Aorta (tissue), 5 donors: ENCODE measurements at regions of chr14 and their contacts with region 1.

Region 1: DNA sequence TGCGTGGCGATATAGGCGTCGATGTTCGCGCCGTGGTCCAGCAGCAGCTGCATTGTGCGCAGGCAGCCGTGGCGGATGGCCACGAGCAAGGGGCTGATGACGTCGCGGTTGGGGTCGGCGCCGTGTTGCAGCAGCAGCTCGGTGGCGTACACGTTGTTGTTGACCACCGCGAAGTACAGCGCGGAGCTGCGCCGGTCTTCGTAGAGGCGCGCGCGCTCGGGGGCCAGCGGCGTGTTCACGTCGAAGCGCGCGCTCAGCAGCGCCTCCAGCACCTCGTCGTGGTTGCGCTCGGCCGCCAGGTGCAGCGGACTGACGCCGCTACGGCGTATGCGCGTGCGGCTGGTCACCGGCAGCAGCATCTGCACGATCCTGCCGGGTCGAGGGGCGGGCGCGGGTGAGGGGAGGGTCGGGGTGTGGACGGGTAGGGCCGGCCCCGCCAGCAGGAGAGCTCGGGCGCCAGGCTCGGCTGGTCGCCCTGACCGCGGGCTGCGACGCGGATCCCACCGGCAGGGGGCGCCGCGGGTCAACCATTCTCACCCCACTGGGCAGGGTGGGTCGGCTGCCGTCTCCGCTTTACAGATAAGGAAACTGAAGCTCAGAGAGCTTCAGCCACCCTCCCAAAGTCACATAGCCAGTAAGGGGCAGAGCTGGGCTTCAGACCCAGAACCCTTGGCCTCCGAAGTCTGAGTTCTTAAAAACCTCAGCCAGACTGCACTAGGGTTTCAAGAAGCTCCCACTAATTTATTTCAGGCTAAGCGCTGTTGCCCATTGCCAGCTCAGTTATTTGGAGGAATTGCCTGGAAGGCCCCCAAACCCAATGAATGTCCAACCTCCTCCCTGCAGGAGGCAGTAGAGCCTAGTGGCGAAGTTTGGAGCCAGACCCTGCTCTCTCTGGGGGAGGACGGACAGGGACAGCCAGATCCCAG is 12.4 kb downstream of the FAM181A start:
- DNase-seq: peak; percentile 90 to 95
- ATAC-seq: peak; percentile 87
- H3K4me3 ChIP-seq: no peak overlapping the region
- H3K27ac ChIP-seq: peak overlapping the region; percentile 16 to 37
- H3K4me1 ChIP-seq: no peaks in the 10 kb centered on the region
- H3K27me3 ChIP-seq: no peaks in the 10 kb centered on the region

Region 2: GRCh38 chr14:94001501-94002396 is 62.2 kb after region 1 on chr14:
- intact Hi-C with region 1: loop called (anchors 1 kb)
- DNase-seq: peak; percentile 65 to 83
- ATAC-seq: peak; percentile 79
- H3K4me3 ChIP-seq: no peak overlapping the region
- H3K27ac ChIP-seq: no peak overlapping the region
- H3K4me1 ChIP-seq: no peaks in the 10 kb centered on the region
- H3K27me3 ChIP-seq: no peaks in the 10 kb centered on the region